HCT116 (cell line): ENCODE measurements at regions of chr2 and their contacts with region 1.

Region 1: DNA sequence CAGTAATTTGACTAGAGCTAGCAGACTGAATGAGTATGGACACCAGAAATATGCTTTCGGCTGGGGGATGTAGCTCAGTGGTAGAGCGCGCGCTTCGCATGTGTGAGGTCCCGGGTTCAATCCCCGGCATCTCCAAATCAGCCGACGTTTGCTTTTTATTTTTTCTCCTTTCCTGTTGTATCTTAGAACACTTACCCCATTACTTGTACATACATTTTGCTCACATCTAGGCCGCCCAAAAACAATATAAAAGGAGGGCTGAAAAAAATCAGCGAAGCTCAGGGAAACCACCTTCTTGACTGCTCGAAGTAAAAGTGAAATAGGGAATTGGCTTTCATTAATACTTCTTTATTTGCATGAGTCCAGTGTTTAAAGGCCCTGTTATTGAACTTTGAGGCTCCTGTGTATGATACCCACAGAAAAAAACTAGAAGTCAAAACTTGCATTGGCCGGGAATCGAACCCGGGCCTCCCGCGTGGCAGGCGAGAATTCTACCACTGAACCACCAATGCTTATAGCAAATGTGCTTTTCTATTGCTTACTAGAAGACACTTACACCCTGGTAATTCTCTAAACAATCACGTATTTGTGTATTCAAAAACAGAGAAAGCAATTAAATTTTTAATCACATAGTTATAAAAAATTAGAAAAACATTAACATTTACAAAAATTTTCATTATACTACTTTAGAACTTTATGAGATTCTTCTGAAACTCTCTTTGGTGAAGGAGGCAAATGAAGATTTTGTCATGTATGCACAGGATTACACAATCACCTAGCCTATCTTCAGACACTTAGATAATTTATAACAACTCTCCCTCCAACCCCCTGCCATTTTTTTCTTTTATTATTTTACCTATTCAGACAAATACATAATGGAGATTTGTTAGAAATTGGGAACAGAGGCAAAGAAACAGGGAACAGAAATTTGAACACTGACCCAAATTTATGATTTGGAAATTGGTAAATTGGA is 35.2 kb upstream of the GPD2 start:
- DNase-seq: peak; percentile 75
- ATAC-seq: peak; percentile 76
- H3K4me3 ChIP-seq: peak overlapping the region; percentile 37 to 60
- H3K27ac ChIP-seq: peak overlapping the region; percentile 82; the same call in 1 of the 2 replicates
- H3K4me1 ChIP-seq: peaks cover 12 to 49% of the 10 kb centered on the region in 2 experiments
- H3K27me3 ChIP-seq: no peaks in the 10 kb centered on the region
- CTCF ChIP-seq: no peak
- POLR2A ChIP-seq: no peak
- RAD21 ChIP-seq: peak; percentile 7; the same call in 1 of the 2 replicates

Region 2: GRCh38 chr2:156341452-156342253 is 59.3 kb before region 1 on chr2:
- CTCF ChIA-PET with region 1: no interaction called
- POLR2A ChIA-PET with region 1: interaction called, 15 read pairs
- RAD21 ChIA-PET with region 1: interaction called, 4 read pairs
- intact Hi-C with region 1: loop called (anchors 1 kb)
- DNase-seq: peak; percentile 86
- ATAC-seq: peak; percentile 74
- H3K4me3 ChIP-seq: peak overlapping the region; percentile 71 to 77
- H3K27ac ChIP-seq: peak overlapping the region; percentile 99
- H3K4me1 ChIP-seq: peaks cover 67 to 89% of the 10 kb centered on the region in 2 experiments
- H3K27me3 ChIP-seq: no peaks in the 10 kb centered on the region
- CTCF ChIP-seq: no peak
- POLR2A ChIP-seq: peak; percentile 43
- RAD21 ChIP-seq: no peak